ENCODE measurements at regions of chr1 and their contacts with region 1.

Region 1: GRCh38 chr1:37434292-37434907 is 40.0 kb upstream of the ZC3H12A start:
- DNase-seq: peak; percentile 8 to 37
- ATAC-seq: peak; percentile 23 to 71
- H3K4me3 ChIP-seq: no peak overlapping the region
- H3K27ac ChIP-seq: no peak overlapping the region
- H3K4me1 ChIP-seq: no peaks in the 10 kb centered on the region
- H3K27me3 ChIP-seq: peaks cover 0 to 17% (median 13%) of the 10 kb centered on the region in 3 donors
- CTCF ChIP-seq: peak; percentile 78 to 90 (median 86)
- POLR2A ChIP-seq: no peak

Region 2: GRCh38 chr1:36516372-36517325 is 917.8 kb before region 1 on chr1:
- in situ Hi-C with region 1: no loop called
- intact Hi-C with region 1: loop called (anchors 5 kb)
- DNase-seq: peak in 1 of 2 donors; percentile 4
- ATAC-seq: no peak
- H3K4me3 ChIP-seq: no peak overlapping the region
- H3K27ac ChIP-seq: no peak overlapping the region
- H3K4me1 ChIP-seq: no peaks in the 10 kb centered on the region
- H3K27me3 ChIP-seq: no peaks in the 10 kb centered on the region
- CTCF ChIP-seq: peak in 4 of 5 experiments; percentile 17 to 53 (median 42)
- POLR2A ChIP-seq: no peak

Region 3: GRCh38 chr1:36553591-36554322 is 880.6 kb before region 1 on chr1:
- in situ Hi-C with region 1: loop called in 1 of 4 experiments (anchors 25 kb)
- intact Hi-C with region 1: no loop called
- DNase-seq: peak in 1 of 2 donors; percentile 14
- ATAC-seq: no peak
- H3K4me3 ChIP-seq: no peak overlapping the region
- H3K27ac ChIP-seq: no peak overlapping the region
- H3K4me1 ChIP-seq: no peaks in the 10 kb centered on the region
- H3K27me3 ChIP-seq: peaks cover 19 to 44% (median 32%) of the 10 kb centered on the region in 3 donors
- CTCF ChIP-seq: peak in 4 of 5 experiments; percentile 23 to 46 (median 36)
- POLR2A ChIP-seq: no peak

Region 4: GRCh38 chr1:36576118-36576517 is 858.3 kb before region 1 on chr1:
- in situ Hi-C with region 1: loop called in 3 of 4 experiments (anchors 10 to 25 kb)
- intact Hi-C with region 1: loop called (anchors 1 kb)
- DNase-seq: peak in 1 of 2 donors; percentile 13
- ATAC-seq: no peak
- H3K4me3 ChIP-seq: no peak overlapping the region
- H3K27ac ChIP-seq: no peak overlapping the region
- H3K4me1 ChIP-seq: no peaks in the 10 kb centered on the region
- H3K27me3 ChIP-seq: peaks cover 3 to 32% (median 16%) of the 10 kb centered on the region in 3 donors
- CTCF ChIP-seq: peak; percentile 15 to 71 (median 64)
- POLR2A ChIP-seq: no peak

Region 5: DNA sequence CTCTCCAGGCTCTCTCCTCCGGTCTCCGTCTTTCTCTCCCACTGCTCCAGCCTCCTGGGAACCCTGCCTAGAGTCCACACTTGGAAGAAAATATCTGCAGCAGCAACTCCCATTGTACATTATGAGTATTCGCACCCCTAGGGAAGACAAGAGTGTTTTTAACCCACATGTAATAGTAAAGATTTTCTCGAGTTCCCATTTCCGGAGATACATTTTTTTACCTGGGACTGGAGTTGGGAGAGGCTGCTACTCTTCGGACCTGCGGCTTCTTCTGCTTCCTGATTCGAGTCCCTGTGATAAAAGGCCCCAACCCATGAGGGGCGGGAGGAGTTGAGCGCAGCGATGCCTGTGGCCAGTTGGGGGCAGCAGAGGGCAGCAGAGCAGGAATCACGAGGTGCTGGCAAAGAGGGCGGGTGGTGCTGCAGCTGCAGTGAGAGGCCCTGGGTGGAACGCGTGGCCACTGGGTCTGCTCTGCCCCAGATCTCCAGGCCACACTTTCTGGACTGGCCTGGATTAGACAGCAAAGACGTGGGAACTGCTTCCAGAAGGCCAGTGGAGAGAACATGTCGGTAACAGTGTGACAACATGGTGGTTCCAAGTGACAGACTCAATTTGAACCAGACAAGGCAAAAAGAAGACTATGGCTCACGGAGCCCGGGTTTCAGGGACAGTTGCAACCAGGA is 730.7 kb before region 1 on chr1:
- in situ Hi-C with region 1: loop called (anchors 5 to 25 kb)
- intact Hi-C with region 1: no loop called
- DNase-seq: peak; percentile 23 to 49
- ATAC-seq: peak in 1 of 2 donors; percentile 66
- H3K4me3 ChIP-seq: no peak overlapping the region
- H3K27ac ChIP-seq: no peak overlapping the region
- H3K4me1 ChIP-seq: no peaks in the 10 kb centered on the region
- H3K27me3 ChIP-seq: peaks cover 2 to 12% (median 11%) of the 10 kb centered on the region in 3 donors
- CTCF ChIP-seq: peak; percentile 50 to 71 (median 56)
- POLR2A ChIP-seq: no peak

Measured in gastrocnemius medialis (tissue), 4 donors.